Endothelial cell of umbilical vein (primary cell): ENCODE measurements at regions of chr2 and their contacts with region 1.

Region 1: DNA sequence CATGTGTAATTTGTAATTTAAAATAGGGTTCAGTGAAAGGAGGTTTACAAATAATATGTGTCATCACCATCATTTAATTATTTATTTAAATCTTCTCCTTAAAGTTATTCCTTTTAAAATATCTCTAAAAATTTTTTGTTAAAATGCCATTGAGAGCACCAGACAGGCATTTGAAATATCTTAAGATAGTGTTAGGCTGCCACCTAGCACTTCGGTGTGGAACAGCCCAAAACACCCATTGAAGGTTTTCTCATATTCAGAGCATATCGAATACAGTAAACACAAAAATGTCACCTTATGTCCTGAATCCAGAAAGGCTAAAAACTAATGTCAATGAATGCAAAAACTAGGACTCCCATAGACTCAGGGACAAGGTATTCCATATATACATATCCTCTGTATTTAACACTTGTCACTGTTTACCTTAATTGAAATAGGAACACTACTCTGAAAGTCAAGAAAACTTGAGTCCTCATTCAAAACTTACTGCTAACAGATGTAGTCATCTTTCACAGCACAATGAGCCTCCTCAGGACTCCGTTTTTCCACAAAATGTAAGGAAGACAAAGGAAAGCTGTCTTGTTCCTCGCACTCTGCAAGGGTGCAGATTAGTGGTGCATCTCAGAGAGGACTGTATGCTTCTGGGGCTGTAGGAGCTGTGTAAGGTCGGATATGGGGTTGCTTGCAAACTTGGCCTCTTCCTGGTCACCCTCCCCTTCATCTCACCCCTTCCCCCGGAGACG is 329.5 kb downstream of the PAX3 start:
- DNase-seq: peak; percentile 52
- H3K4me3 ChIP-seq: no peak overlapping the region
- H3K27ac ChIP-seq: no peak overlapping the region
- H3K4me1 ChIP-seq: no peaks in the 10 kb centered on the region
- H3K27me3 ChIP-seq: no peaks in the 10 kb centered on the region
- CTCF ChIP-seq: peak; percentile 44 to 58
- POLR2A ChIP-seq: no peak

Region 2: GRCh38 chr2:221747289-221747972 is 221.8 kb before region 1 on chr2:
- CTCF ChIA-PET with region 1: no interaction called
- POLR2A ChIA-PET with region 1: no interaction called
- dilution Hi-C with region 1: no loop called
- intact Hi-C with region 1: loop called (anchors 5 kb)
- DNase-seq: no peak
- H3K4me3 ChIP-seq: no peak overlapping the region
- H3K27ac ChIP-seq: no peak overlapping the region
- H3K4me1 ChIP-seq: no peaks in the 10 kb centered on the region
- H3K27me3 ChIP-seq: no peaks in the 10 kb centered on the region
- CTCF ChIP-seq: no peak
- POLR2A ChIP-seq: no peak

Region 3: GRCh38 chr2:221981903-221982470 is 12.7 kb after region 1 on chr2:
- CTCF ChIA-PET with region 1: no interaction called
- POLR2A ChIA-PET with region 1: no interaction called
- dilution Hi-C with region 1: no loop called
- intact Hi-C with region 1: no loop called
- DNase-seq: no peak
- H3K4me3 ChIP-seq: no peak overlapping the region
- H3K27ac ChIP-seq: no peak overlapping the region
- H3K4me1 ChIP-seq: no peaks in the 10 kb centered on the region
- H3K27me3 ChIP-seq: no peaks in the 10 kb centered on the region
- CTCF ChIP-seq: no peak
- POLR2A ChIP-seq: no peak